ENCODE measurements at regions of chr11 and their contacts with region 1.

Region 1: GRCh38 chr11:67780056-67780455 is 105.6 kb upstream of the ALDH3B2 start:
- DNase-seq: no peak
- H3K4me3 ChIP-seq: no peak overlapping the region
- H3K27ac ChIP-seq: no peak overlapping the region
- H3K4me1 ChIP-seq: no peaks in the 10 kb centered on the region
- H3K27me3 ChIP-seq: peaks cover 5% of the 10 kb centered on the region; the same call in 1 of the 2 replicates
- CTCF ChIP-seq: no peak

Region 2: DNA sequence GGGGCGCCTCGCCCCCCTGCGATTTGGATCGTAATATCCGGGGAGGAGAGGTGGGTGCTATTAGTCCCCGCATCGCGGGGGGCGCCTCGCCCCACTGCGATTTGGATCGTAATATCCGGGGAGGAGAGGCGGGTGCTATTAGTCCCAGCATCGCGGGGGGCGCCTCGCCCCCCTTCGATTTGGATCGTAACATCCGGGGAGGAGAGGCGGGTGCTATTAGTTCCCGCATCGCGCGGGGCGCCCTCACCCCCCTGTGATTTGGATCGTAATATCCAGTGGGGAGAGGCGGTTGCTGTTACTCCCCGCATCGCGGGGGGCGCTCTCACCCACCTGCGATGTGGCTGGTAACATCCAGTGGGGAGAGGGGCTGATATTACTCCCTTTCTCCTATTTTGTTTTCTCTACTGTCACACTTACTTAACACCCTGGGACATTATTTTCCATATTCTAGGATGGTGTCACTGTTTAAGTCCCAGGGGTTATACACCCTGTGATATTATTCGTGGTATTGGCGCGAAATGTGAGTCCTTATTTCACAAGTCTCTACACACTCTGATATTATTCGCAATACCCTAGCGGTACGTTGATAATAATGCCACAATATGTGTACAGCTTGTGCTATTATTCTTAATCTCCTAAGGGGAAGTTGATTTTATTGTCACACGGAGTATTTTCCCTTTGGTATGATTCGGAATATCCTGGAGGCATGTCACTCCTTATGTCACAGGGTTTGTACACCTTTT is 47.8 kb before region 1 on chr11:
- CTCF ChIA-PET with region 1: no interaction called
- POLR2A ChIA-PET with region 1: no interaction called
- intact Hi-C with region 1: loop called (anchors 5 kb)
- DNase-seq: no peak
- H3K4me3 ChIP-seq: no peak overlapping the region
- H3K27ac ChIP-seq: no peak overlapping the region
- H3K4me1 ChIP-seq: peaks cover 19% of the 10 kb centered on the region
- H3K27me3 ChIP-seq: no peaks in the 10 kb centered on the region
- CTCF ChIP-seq: no peak